Activated naive CD4-positive, alpha-beta T cell treated with anti-CD3 and anti-CD28 coated beads for 36 hours (primary cell): ENCODE measurements at regions of chr10 and their contacts with region 1.

Region 1: DNA sequence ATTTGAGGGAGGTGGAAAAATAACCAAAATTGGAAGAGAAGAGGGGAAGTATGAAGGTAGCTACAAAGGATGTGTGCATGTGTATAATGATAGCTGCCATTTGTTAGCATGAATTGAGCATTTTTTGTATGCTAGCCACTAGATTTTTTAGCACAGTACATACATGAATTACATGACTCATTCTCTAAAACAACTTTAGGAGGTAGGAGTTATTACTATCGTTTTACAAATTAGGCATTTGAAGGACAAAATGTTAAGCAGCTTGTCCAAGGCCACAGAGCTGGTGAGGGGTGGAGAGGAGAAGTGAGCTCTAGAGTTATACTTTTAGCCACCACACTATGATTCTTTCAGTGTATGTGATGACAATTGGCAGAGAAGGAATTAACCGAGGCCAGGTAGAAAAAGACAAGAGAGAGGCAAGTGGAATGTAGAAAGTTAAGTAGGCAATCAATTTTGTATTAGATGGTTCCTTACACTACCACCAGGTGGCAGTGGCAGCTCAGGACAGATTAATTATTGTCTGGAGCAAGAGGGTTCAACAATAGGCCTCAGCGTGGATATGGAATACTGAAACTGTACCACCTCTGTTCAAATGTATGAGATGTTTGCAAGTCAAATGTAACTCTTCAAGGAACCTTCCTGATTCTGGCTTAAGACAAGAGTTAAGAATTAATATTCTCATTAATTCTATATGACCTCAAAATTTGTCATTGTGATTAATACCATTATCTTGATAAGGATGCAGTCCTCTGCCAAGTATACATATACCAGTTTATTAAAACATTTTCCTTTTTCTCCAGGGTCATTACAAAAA is 128.0 kb downstream of the MBL2 start:
- DNase-seq: peak; percentile 21
- H3K4me3 Mint-ChIP-seq: no peak overlapping the region
- H3K27ac Mint-ChIP-seq: no peak overlapping the region
- H3K4me1 Mint-ChIP-seq: no peaks in the 10 kb centered on the region
- H3K27me3 Mint-ChIP-seq: no peaks in the 10 kb centered on the region

Region 2: GRCh38 chr10:52729271-52730104 is 84.9 kb after region 1 on chr10:
- CTCF ChIA-PET with region 1: interaction called, 4 read pairs
- intact Hi-C with region 1: loop called (anchors 1 kb)
- DNase-seq: no peak
- H3K4me3 Mint-ChIP-seq: no peak overlapping the region
- H3K27ac Mint-ChIP-seq: no peak overlapping the region
- H3K4me1 Mint-ChIP-seq: no peaks in the 10 kb centered on the region
- H3K27me3 Mint-ChIP-seq: no peaks in the 10 kb centered on the region

Region 3: DNA sequence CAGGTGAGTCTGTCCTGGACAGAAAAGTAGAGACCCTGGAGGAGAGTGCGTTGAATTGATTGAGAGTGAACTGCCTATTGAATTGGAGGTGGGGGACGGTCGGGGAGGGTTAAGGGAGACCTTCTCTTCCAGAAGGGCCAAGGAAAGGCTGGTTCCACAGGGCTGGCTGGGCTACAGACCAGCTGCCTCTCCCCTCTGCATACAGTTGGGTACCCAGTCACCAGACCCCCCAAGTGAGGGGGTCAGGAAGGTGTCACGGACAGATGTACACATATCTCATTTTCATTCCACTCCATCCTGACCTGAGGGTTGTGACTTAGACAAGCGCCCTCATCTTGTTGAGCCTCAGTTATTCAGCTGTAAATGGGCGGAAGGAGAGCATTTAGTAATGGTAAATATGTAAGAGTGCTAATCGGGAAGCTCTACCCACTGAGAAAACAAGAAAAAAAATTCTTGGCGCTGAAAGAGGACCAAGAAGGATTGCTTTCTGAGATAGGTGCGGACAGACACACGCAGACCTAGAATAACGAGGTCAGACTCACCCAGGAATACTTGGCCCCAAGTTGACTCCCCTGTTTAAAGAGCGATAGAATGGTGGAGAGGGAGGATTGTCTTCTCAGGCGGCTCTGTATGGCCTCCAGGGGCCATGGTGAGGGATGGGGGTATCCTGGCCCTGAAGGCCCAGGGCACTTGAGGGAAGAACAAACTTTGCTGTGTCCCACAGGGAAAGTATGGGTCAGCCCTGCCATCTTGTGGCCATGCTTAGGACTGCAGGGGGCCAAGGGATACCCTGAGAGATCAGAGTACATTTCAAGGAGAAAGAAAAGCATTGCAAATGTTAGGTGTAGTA is 135.2 kb after region 1 on chr10:
- CTCF ChIA-PET with region 1: interaction called, 8 read pairs
- intact Hi-C with region 1: loop called (anchors 1 kb)
- DNase-seq: peak; percentile 67
- H3K4me3 Mint-ChIP-seq: no peak overlapping the region
- H3K27ac Mint-ChIP-seq: no peak overlapping the region
- H3K4me1 Mint-ChIP-seq: no peaks in the 10 kb centered on the region
- H3K27me3 Mint-ChIP-seq: no peaks in the 10 kb centered on the region